T-cell (primary cell): ENCODE measurements at regions of chr2 and their contacts with region 1.

Region 1: GRCh38 chr2:114714313-114714712 is 271.9 kb downstream of the DPP10 start:
- DNase-seq: no peak
- ATAC-seq: no peak
- H3K4me3 ChIP-seq: no peak overlapping the region
- H3K4me3 Mint-ChIP-seq: no peak overlapping the region
- H3K27ac ChIP-seq: no peak overlapping the region
- H3K27ac Mint-ChIP-seq: no peak overlapping the region
- H3K4me1 ChIP-seq: no peaks in the 10 kb centered on the region
- H3K4me1 Mint-ChIP-seq: no peaks in the 10 kb centered on the region
- H3K27me3 ChIP-seq: no peaks in the 10 kb centered on the region
- H3K27me3 Mint-ChIP-seq: peaks cover 0 to 3% of the 10 kb centered on the region in 2 donors

Region 2: GRCh38 chr2:114769110-114769509 is 54.8 kb after region 1 on chr2:
- CTCF ChIA-PET with region 1: no interaction called
- POLR2A ChIA-PET with region 1: interaction called in 1 of 2 experiments, 10 read pairs
- DNase-seq: no peak
- ATAC-seq: no peak
- H3K4me3 ChIP-seq: no peak overlapping the region
- H3K4me3 Mint-ChIP-seq: no peak overlapping the region
- H3K27ac ChIP-seq: no peak overlapping the region
- H3K27ac Mint-ChIP-seq: no peak overlapping the region
- H3K4me1 ChIP-seq: no peaks in the 10 kb centered on the region
- H3K4me1 Mint-ChIP-seq: no peaks in the 10 kb centered on the region
- H3K27me3 ChIP-seq: no peaks in the 10 kb centered on the region
- H3K27me3 Mint-ChIP-seq: peaks cover 0 to 2% of the 10 kb centered on the region in 2 donors